Right lobe of liver (tissue), 6 donors: ENCODE measurements at regions of chr3 and their contacts with region 1.

Region 1: DNA sequence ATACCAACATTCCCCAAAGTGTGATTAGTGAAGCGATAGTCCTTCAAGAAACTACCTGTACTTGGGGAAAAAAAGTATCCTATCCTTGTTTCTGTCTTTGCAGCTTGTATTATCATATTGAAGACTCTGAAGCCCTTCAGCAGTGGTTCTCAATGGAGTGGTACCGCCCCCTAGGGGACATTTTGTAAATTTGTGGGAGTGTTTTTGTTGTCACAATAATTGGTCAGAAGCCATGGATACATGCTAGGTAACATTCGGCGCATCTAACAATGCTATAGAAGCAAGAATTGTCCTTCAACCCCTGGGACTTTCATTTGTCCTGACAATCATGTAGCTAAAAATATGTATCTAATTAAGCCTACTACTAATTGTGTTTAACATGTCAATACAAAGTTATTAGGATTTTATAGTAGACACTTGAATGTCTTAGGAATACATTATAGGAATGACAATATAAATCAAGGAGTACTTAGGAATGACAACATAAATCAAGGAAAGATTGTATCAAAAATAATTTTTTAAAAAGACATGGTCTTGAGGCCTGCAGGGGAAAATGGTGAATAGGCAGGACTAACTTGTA is 53.7 kb downstream of the NMD3 start:
- DNase-seq: no peak
- ATAC-seq: peak; percentile 49 to 76 (median 66)
- H3K4me3 ChIP-seq: no peak overlapping the region
- H3K27ac ChIP-seq: no peak overlapping the region
- H3K4me1 ChIP-seq: no peaks in the 10 kb centered on the region
- H3K27me3 ChIP-seq: no peaks in the 10 kb centered on the region
- CTCF ChIP-seq: peak; percentile 49 to 65 (median 54)
- POLR2A ChIP-seq: no peak

Region 2: DNA sequence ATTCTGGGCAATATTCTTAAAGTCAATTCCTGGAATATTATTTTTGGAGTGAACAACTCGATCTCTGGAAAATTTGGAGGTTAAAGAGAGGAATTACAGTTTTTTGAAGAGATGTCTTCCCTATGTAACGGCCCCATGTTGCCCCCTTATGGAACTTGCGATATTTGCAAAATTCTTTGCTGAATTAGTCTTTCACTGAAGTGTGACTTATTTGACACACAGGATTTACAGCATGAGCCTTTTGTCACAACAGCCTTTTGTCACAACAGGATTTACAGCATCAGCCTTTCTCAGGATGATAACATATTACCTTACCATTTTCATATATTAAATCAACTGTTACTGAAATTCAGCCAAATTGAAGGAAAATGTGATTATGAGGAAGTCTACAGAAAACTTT is 134.3 kb after region 1 on chr3:
- intact Hi-C with region 1: loop called in 1 of 2 experiments (anchors 10 kb)
- DNase-seq: no peak
- ATAC-seq: peak; percentile 48 to 73 (median 64)
- H3K4me3 ChIP-seq: no peak overlapping the region
- H3K27ac ChIP-seq: no peak overlapping the region
- H3K4me1 ChIP-seq: peaks cover 0 to 13% (median 5%) of the 10 kb centered on the region in 4 donors
- H3K27me3 ChIP-seq: no peaks in the 10 kb centered on the region
- CTCF ChIP-seq: peak; percentile 50 to 60 (median 54)
- POLR2A ChIP-seq: no peak

Region 3: DNA sequence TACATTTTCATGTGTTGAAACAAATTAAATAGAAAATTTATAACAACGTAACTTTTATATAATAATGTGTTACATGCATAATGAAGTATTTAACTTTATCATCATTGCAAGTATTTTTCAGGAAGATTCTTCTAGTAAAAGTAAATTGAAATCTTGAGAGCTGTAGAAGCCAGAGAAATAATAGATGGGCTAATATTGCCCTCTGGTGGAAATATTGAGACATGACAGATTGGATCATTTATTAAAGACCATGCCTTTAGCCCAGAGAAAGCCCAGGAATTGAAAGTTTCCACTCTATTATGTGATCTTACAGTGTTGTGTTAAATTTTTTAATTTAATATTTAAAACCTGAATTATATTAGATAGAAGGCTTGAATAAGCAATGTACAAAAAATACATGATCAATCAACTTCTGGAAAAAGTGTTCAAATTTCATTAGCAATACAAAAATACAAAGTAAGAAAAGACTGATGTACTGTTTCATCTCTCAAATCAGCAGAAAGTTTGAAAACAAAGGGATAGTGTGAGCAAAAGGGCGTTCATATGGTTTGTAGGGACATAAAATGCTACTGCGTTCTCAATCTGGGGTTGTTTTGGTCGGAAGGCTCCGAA is 149.2 kb after region 1 on chr3:
- intact Hi-C with region 1: loop called in 1 of 2 experiments (anchors 5 kb)
- DNase-seq: no peak
- ATAC-seq: peak; percentile 66 to 71 (median 68)
- H3K4me3 ChIP-seq: no peak overlapping the region
- H3K27ac ChIP-seq: no peak overlapping the region
- H3K4me1 ChIP-seq: peaks cover 0 to 12% (median 3%) of the 10 kb centered on the region in 4 donors
- H3K27me3 ChIP-seq: no peaks in the 10 kb centered on the region
- CTCF ChIP-seq: peak; percentile 72 to 90 (median 76)
- POLR2A ChIP-seq: no peak